ENCODE measurements at regions of chr20 and their contacts with region 1.

Region 1: DNA sequence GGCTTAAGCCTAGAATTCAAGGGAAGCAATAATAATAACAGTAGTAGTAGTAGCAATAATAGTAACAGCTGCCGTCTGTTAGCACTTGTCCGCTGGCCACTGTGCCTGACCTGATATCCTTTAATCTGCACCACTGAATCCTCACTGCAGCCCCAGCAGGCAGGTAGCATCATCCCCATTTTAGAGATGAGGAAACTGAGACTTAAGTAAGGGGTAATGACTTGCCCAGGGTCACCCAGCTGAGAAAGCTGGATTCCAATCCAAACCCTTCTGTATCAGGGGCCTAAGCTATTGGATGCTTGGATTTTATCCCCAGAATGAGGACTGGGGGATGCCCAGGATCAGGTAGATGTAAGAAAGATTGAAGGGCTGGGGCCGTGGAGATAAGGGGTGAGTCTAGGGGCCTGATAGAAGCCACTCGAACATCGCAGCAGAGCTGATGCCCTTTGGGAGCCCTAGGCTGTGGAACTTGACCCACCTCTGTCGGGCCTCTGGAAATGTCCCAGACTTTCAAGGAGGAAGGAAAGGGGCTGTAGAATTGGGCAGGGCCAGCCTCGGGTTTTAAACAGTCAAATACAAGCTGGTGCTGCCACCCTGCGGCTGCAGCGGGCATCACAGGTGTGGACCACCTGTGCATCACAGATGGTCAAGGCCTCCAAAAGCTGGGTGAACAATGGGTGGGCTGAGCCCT is 102.1 kb upstream of the MYL9 start:
- DNase-seq: peak; percentile 84
- ATAC-seq: peak; percentile 70
- H3K4me3 Mint-ChIP-seq: no peak overlapping the region
- H3K27ac Mint-ChIP-seq: no peak overlapping the region
- H3K4me1 Mint-ChIP-seq: peaks cover 3% of the 10 kb centered on the region
- H3K27me3 Mint-ChIP-seq: peaks cover 6% of the 10 kb centered on the region
- CTCF ChIP-seq: peak; percentile 83

Region 2: GRCh38 chr20:36214684-36215256 is 224.4 kb before region 1 on chr20:
- CTCF ChIA-PET with region 1: interaction called, 14 read pairs
- POLR2A ChIA-PET with region 1: interaction called, 4 read pairs
- intact Hi-C with region 1: no loop called
- DNase-seq: peak; percentile 22
- ATAC-seq: peak; percentile 71
- H3K4me3 Mint-ChIP-seq: no peak overlapping the region
- H3K27ac Mint-ChIP-seq: no peak overlapping the region
- H3K4me1 Mint-ChIP-seq: no peaks in the 10 kb centered on the region
- H3K27me3 Mint-ChIP-seq: no peaks in the 10 kb centered on the region
- CTCF ChIP-seq: peak; percentile 62

Region 3: DNA sequence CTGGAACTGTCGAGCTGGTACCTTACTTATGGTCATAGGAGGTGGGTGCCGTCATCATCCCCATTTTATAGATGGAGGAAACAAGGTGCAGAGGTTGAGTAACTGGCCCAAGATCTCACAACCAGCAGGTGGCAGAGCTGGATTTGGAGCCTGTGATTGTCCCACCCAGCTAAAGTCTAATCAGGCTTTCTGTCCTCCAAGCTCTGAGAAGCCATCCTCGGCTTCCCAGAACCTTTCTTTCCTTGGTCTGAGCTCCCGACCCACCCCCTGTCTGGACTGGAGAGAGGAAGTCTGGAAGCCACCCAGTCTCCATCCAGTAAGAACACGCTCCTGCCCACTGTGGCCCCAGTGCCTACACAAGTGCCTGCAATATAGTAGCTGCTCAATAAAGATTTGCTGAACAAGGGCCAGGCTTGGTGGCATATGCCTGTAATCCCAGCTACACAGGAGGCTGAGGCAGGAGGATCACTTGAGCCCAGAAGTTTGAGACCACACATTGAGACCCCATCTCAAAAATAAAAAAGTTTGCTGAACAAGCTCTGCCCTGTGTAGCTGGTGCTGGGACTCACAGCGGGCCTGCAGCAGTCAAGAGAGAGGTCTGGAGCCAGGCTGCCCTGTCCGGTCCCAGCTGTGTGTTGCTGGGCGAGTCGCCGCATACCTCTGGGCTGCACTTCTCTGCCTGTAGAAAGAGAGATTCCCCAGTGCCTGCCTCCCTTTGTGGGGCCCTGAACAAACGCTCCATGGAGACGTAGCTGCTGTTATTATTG is 165.6 kb before region 1 on chr20:
- CTCF ChIA-PET with region 1: interaction called, 13 read pairs
- POLR2A ChIA-PET with region 1: no interaction called
- intact Hi-C with region 1: loop called (anchors 10 kb)
- DNase-seq: peak; percentile 44
- ATAC-seq: no peak
- H3K4me3 Mint-ChIP-seq: no peak overlapping the region
- H3K27ac Mint-ChIP-seq: no peak overlapping the region
- H3K4me1 Mint-ChIP-seq: no peaks in the 10 kb centered on the region
- H3K27me3 Mint-ChIP-seq: no peaks in the 10 kb centered on the region
- CTCF ChIP-seq: peak; percentile 16

Region 4: GRCh38 chr20:36449663-36450062 is 10.5 kb after region 1 on chr20:
- CTCF ChIA-PET with region 1: interaction called, 23 read pairs
- POLR2A ChIA-PET with region 1: no interaction called
- intact Hi-C with region 1: no loop called
- DNase-seq: no peak
- ATAC-seq: no peak
- H3K4me3 Mint-ChIP-seq: no peak overlapping the region
- H3K27ac Mint-ChIP-seq: no peak overlapping the region
- H3K4me1 Mint-ChIP-seq: no peaks in the 10 kb centered on the region
- H3K27me3 Mint-ChIP-seq: no peaks in the 10 kb centered on the region
- CTCF ChIP-seq: no peak

Measured in activated CD8-positive, alpha-beta T cell treated with anti-CD3 and anti-CD28 coated beads for 36 hours (primary cell).